ENCODE measurements at regions of chr9 and their contacts with region 1.

Region 1: GRCh38 chr9:129253803-129254481 is 75.9 kb upstream of the IER5L start:
- DNase-seq: no peak
- H3K4me3 ChIP-seq: no peak overlapping the region
- H3K27ac ChIP-seq: no peak overlapping the region
- H3K4me1 ChIP-seq: peaks cover 0 to 13% (median 9%) of the 10 kb centered on the region in 4 experiments; a peak in 6 of 7 replicates
- H3K27me3 ChIP-seq: peaks cover under 1 to 15% (median 12%) of the 10 kb centered on the region in 4 experiments
- CTCF ChIP-seq: no peak
- EP300 ChIP-seq: no peak
- POLR2A ChIP-seq: no peak
- RAD21 ChIP-seq: no peak

Region 2: DNA sequence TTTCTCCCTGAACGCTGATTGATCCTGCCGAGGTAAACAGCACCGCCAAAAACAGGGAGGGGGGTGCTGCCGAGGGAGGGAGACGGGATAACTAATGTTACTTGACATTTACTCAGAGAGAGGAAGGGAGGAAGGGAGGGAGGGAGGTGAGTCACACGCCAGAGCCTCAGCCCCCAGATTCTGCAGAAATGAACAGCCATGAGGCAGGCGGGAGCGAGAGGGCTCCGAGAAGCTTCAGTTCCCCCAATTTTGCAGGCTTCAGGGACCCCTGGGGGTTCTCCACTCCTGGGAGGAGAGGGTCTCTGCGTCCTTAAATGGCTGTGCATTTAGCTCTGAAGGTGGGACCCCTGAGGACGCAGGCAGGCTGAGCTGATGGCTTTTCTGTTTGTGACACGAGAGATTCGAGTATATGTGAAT is 16.7 kb before region 1 on chr9:
- CTCF ChIA-PET with region 1: interaction called, 14 read pairs
- POLR2A ChIA-PET with region 1: no interaction called
- DNase-seq: no peak
- H3K4me3 ChIP-seq: no peak overlapping the region
- H3K27ac ChIP-seq: no peak overlapping the region
- H3K4me1 ChIP-seq: peaks cover 0 to 10% (median 4%) of the 10 kb centered on the region in 4 experiments; a peak in 5 of 7 replicates
- H3K27me3 ChIP-seq: 0 out of 7 replicates have a peak, but pooled peaks cover 0 to 4% (median 0%) of the 10 kb centered on the region in 4 experiments
- CTCF ChIP-seq: no peak
- EP300 ChIP-seq: no peak
- POLR2A ChIP-seq: no peak
- RAD21 ChIP-seq: no peak

Region 3: GRCh38 chr9:129242191-129242940 is 11.6 kb before region 1 on chr9:
- CTCF ChIA-PET with region 1: interaction called, 14 read pairs
- POLR2A ChIA-PET with region 1: no interaction called
- DNase-seq: no peak
- H3K4me3 ChIP-seq: no peak overlapping the region
- H3K27ac ChIP-seq: no peak overlapping the region
- H3K4me1 ChIP-seq: peaks cover 0 to 10% (median under 1%) of the 10 kb centered on the region in 4 experiments; a peak in 5 of 7 replicates
- H3K27me3 ChIP-seq: peaks cover 0 to 4% (median 0%) of the 10 kb centered on the region in 4 experiments; a peak in 3 of 7 replicates
- CTCF ChIP-seq: no peak
- EP300 ChIP-seq: no peak
- POLR2A ChIP-seq: no peak
- RAD21 ChIP-seq: no peak

Measured in H1 (cell line).